Activated B cell treated with CpG ODN at 0.5 μM for 24 hours (primary cell): ENCODE measurements at regions of chr12 and their contacts with region 1.

Region 1: DNA sequence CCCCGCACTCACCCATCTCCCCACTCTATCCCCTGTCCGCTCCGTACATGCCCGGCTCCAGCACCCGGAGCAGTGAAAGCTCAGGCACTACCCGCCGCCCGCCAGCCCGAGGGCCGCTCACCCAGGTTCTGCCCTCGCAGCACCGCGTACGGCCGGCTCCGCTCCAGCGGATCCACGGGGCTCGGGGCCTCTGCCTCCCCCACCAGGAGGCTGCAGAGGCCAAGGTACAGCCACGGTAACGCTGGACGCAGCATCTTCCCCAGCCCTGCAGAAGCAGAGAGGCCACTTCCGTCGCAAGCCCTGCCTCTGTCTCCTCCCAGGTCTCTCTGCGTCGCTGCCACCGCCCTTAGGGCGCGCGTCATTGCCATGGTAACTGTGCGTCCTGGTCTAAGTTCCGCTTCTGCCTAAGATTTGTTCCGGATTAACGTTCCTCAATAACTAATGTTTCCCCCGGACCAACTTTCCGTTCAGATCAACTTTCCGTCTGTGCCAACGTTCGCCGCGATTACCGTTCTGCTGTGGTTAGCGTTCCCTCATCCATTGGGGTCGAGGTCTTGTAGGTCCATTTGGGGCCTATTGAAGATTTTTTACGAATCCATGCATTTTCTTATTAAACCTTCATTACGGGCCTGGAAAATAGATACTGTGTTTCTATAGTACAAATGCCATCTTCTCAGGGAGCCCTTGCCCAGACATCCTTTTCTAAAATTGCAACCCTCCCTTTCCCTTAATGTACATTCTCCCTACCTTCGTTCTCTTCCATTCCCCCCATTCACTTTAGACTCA is at the start of gene C12orf76:
- DNase-seq: peak; percentile 80
- ATAC-seq: peak; percentile 96
- H3K4me3 Mint-ChIP-seq: peak within 1 kb of the TSS; percentile 95
- H3K27ac Mint-ChIP-seq: peak within 1 kb of the TSS; percentile 100
- H3K4me1 Mint-ChIP-seq: peaks cover 52% of the 10 kb centered on the region
- H3K27me3 Mint-ChIP-seq: no peaks in the 10 kb centered on the region
- CTCF ChIP-seq: no peak
- total RNA-seq, gene C12orf76: 20.5 and 24.8 TPM in 2 replicates

Region 2: DNA sequence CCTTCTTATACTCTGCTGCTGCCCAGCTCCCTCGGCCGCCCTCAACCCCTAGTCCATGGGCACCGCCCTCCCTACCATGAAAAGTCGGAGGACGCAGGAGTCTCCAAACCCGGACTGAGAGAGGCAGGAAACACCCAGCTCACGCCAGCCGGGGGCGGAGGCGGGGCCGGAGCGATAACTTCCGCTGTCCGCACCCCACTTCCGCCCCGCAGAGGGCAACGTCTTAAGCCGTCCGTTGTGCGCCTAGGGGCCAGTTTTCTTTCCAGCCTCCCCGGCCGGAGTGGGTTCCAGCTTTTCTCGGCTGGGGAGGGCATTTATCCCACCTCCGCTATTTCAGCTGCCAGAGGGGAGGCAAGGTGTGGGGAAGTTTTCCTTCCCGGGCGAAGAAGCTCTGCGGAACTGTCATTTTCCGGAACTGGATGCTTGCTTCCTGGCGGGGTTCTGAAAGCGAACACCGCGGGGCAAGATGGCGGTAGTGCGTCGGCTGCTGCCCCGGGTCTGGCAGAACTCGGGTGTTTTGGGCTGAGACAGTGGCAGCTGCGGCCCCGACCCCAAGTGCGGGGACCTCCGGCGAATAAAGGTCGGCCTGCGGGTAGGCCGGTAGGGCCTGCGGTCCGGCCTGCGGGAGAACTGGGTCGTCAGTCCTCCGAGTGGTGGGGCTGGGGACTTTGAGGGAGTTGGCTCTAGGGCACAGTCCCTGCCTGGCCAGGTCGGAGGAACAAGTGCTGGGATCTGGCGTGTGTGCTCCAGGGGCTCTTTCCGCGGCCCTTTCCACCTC is 571.1 kb before region 1 on chr12 and contains the starts of genes KCTD10 and UBE3B:
- CTCF ChIA-PET with region 1: no interaction called
- POLR2A ChIA-PET with region 1: no interaction called
- intact Hi-C with region 1: loop called (anchors 1 kb)
- DNase-seq: peak; percentile 84
- ATAC-seq: peak; percentile 94
- H3K4me3 Mint-ChIP-seq: peak within 1 kb of the TSS; percentile 99
- H3K27ac Mint-ChIP-seq: peak within 1 kb of the TSS; percentile 98
- H3K4me1 Mint-ChIP-seq: peaks cover 38% of the 10 kb centered on the region
- H3K27me3 Mint-ChIP-seq: no peaks in the 10 kb centered on the region
- CTCF ChIP-seq: no peak
- total RNA-seq, gene KCTD10: 32.7 and 38.7 TPM in 2 replicates
- total RNA-seq, gene UBE3B: 35.4 and 36.9 TPM in 2 replicates

Region 3: DNA sequence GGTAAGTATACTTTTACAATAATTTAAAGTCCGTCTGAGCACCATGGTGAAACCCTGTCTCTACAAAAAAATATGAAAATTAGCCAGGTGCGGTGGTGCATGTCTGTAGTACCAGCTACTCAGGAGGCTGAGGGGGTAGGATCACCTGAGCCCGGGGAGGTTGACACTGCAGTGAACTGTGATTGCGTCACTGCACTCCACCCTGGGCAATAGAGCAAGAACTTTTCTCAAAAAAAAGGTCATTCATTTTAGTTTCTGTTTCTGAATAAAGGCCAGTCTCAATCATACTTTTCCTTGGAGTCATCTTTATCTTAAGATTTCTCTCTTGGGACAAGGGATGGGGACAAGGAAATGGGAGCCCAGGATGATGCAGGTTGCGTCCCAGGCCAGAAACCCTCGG is 36.3 kb before region 1 on chr12:
- CTCF ChIA-PET with region 1: no interaction called
- POLR2A ChIA-PET with region 1: no interaction called
- intact Hi-C with region 1: loop called (anchors 1 kb)
- DNase-seq: peak; percentile 60
- ATAC-seq: peak; percentile 90
- H3K4me3 Mint-ChIP-seq: peak overlapping the region; percentile 84
- H3K27ac Mint-ChIP-seq: peak overlapping the region; percentile 95
- H3K4me1 Mint-ChIP-seq: peaks cover 80% of the 10 kb centered on the region
- H3K27me3 Mint-ChIP-seq: no peaks in the 10 kb centered on the region
- CTCF ChIP-seq: no peak

Region 4: DNA sequence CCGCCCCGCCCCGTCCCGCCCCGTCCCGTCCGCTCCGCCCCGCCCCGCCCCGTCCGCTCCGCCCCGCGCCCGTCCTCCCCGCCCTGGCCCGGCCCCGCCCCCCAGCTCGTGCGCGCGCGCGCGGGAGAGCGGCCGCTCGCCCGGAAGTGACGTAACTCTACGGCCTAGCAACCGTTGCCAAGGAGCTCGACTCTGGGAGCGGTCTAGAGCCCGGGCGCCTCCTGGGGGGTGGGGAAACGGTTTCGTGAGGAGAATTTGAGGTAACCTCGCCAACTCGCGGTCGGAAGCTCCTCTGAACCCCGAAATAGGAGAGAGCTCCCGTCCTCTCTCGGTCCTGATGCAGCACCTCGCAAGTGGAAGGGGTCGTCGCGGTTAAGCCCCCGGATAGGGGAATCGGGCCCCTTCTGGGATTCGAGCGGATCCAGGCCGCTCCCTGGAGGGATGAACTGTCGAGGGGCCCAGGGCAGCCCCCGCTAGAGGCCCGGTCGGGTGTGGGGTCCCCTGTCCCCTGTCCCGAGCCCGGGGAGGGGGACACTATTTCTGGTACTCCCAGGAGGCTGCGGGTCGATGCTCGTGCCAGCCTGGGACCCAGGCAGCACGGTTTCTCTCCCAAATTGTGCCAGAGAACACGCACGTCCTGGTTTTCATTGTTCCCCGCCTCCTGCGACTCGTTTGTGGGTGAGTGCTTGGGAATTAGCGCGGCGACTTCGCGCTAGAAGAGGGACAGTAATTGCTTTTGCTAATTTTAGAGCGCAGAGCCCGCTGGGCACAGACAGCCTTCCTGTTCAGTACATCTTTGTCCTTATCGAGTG is 76.0 kb after region 1 on chr12 and contains the start of gene IFT81:
- CTCF ChIA-PET with region 1: no interaction called
- POLR2A ChIA-PET with region 1: no interaction called
- intact Hi-C with region 1: loop called (anchors 1 kb)
- DNase-seq: peak; percentile 95
- ATAC-seq: peak; percentile 91
- H3K4me3 Mint-ChIP-seq: peak within 1 kb of the TSS; percentile 92
- H3K27ac Mint-ChIP-seq: peak within 1 kb of the TSS; percentile 79
- H3K4me1 Mint-ChIP-seq: peaks cover 8% of the 10 kb centered on the region
- H3K27me3 Mint-ChIP-seq: no peaks in the 10 kb centered on the region
- CTCF ChIP-seq: no peak
- total RNA-seq, gene IFT81: 4.3 and 4.4 TPM in 2 replicates

Region 5: DNA sequence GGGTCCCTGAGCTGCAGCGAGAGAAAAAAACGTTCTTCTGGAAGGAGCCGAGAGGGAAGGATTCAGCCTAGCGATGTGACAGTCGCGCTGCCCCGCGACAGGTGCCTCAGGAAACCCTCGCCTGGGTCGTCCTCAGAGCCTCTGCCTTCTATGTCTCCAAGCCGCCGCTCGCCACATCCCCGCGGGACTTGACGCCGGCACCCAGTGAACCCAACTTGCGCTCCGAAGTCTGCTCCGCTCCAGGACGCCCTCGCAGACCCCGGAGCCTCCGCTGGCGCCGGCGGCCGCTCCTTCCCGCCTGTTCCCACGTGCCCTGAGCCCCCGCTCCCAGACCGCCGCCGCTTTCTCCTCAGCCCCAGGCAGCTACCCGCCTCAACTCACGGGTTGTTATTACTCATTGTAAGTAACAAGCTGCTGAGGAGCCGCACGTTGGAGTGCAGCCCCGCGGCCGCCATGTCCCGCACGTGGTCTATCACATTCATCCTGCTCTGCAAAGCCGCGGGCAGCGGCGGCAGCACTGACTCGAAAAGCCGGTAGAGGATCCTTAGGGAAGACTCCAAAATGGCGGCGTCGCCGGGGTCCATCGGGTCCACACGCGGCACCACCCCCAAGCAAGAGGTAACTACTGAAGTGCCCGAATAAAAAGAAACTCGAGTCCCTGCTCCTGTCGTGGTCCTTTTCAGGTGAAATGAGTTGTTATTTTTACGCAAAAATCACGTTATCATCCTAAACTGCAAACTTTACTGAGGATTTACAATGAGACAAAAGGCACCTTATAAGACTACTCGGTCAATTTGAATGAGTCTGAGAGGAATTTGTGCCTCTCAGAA is 354.9 kb after region 1 on chr12 and contains the start of gene ANAPC7:
- CTCF ChIA-PET with region 1: no interaction called
- POLR2A ChIA-PET with region 1: no interaction called
- intact Hi-C with region 1: loop called (anchors 1 kb)
- DNase-seq: peak; percentile 73
- ATAC-seq: peak; percentile 94
- H3K4me3 Mint-ChIP-seq: peak within 1 kb of the TSS; percentile 99
- H3K27ac Mint-ChIP-seq: peak within 1 kb of the TSS; percentile 99
- H3K4me1 Mint-ChIP-seq: peaks cover 33% of the 10 kb centered on the region
- H3K27me3 Mint-ChIP-seq: no peaks in the 10 kb centered on the region
- CTCF ChIP-seq: no peak
- total RNA-seq, gene ANAPC7: 69.8 and 76.2 TPM in 2 replicates

Region 6: DNA sequence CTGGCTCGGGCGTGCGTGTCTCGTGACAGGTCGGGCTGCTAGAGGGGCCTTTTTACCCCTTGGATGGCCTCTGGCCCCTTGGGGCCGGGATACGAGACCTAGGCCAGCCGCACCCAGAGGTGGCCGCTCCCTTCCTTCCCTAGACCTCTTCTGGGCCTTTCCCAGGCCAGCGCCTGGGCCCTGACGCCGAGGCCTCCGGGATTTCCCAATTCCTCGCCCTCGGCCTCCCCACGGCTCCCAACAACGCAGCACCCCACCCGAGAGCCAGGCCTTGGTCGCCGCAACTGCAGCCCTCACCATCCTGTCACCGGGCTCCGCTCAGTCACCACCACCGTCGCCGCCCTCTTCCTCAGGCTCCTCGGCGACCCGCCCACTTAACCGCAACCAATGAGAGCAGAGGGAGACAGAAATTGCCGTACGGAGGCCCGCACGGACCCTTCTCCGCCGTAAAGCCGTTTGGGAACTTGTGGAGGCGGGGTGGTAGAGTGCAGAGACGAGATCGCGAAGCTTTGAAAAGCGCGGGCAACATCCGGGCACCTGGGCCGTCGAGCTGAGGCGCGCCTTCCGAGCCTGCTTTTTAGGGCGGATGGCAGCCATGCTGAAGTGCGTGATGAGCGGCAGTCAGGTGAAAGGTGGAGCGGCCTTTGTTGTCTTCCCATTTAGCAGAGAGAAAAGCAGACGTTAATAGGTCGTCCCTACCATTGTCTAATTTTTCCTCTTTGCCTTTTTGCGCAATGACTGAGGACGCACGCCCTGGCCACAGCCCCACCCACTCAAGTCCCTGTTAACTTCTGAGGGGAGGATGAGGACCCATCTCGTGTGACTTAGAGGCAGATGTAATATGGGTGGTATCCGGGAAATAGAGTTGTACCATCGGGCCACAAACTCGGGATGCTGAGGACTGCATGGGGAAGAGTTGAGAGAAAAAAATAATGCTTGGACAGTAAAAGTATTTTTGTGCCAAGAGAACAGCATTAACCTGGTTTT is 453.6 kb after region 1 on chr12 and contains the starts of genes RAD9B and VPS29:
- CTCF ChIA-PET with region 1: no interaction called
- POLR2A ChIA-PET with region 1: no interaction called
- intact Hi-C with region 1: loop called (anchors 1 kb)
- DNase-seq: peak; percentile 95
- ATAC-seq: peak; percentile 95
- H3K4me3 Mint-ChIP-seq: peak within 1 kb of the TSS; percentile 99
- H3K27ac Mint-ChIP-seq: peak within 1 kb of the TSS; percentile 96
- H3K4me1 Mint-ChIP-seq: peaks cover 36% of the 10 kb centered on the region
- H3K27me3 Mint-ChIP-seq: no peaks in the 10 kb centered on the region
- CTCF ChIP-seq: no peak
- total RNA-seq, gene RAD9B: 1.2 and 1.3 TPM in 2 replicates
- total RNA-seq, gene VPS29: 99.6 and 117 TPM in 2 replicates

Region 7: DNA sequence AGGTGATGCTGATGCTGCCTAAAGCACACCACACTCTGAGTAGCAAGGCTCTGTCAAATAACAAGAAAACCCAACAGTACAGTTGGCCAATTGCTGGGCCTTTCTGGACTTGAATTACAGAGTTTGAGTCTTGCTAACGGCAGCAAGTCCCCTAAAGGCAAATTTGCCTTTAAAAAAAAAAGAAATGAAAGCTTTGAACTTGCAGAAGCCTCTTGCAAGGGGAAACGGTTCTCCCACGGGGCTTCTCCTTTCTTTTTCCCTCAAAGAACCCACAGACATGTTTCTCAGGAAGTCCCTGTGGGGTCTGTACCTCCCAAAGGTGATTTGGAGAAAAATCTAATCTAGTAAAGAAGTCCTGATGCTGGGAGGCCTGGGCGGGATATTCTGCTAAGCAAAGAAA is 1063.2 kb after region 1 on chr12:
- CTCF ChIA-PET with region 1: no interaction called
- POLR2A ChIA-PET with region 1: no interaction called
- intact Hi-C with region 1: no loop called
- DNase-seq: no peak
- ATAC-seq: no peak
- H3K4me3 Mint-ChIP-seq: no peak overlapping the region
- H3K27ac Mint-ChIP-seq: no peak overlapping the region
- H3K4me1 Mint-ChIP-seq: peaks cover 4% of the 10 kb centered on the region
- H3K27me3 Mint-ChIP-seq: peaks cover 18% of the 10 kb centered on the region
- CTCF ChIP-seq: no peak